GM13976 (cell line): ENCODE measurements at regions of chr12 and their contacts with region 1.

Region 1: GRCh38 chr12:31406345-31406744 is 80.4 kb upstream of the SINHCAF start:
- DNase-seq: peak; percentile 64
- CTCF ChIP-seq: no peak

Region 2: GRCh38 chr12:30862486-30862885 is 543.9 kb before region 1 on chr12:
- in situ Hi-C with region 1: no loop called
- DNase-seq: no peak
- CTCF ChIP-seq: no peak

Region 3: DNA sequence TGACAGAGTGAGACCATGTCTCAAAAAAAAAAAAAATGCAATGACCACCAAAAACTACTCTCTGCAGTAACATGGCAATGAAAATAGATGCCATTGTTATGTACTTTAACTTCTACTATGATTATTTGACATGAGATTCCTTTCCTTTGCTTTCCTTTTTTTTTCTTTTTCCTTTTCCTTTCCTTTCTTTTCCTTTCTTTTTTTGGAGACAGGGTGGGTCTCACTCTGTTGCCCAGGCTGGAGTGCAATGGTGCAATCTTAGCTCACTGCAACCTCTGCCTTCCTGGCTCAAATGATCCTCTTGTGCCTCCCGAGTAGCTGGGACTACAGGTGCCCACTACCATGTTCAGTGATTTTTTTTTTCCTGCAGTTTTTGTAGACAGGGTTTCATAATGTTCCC is 228.3 kb after region 1 on chr12:
- in situ Hi-C with region 1: loop called (anchors 5 kb)
- DNase-seq: no peak
- CTCF ChIP-seq: no peak